ENCODE measurements at regions of chr1 and their contacts with region 1.

Region 1: GRCh38 chr1:201170533-201171062 is 16.3 kb upstream of the TMEM9 start:
- DNase-seq: peak; percentile 88
- H3K4me3 Mint-ChIP-seq: peak overlapping the region; percentile 81
- H3K27ac Mint-ChIP-seq: peak overlapping the region; percentile 83
- H3K4me1 Mint-ChIP-seq: peaks cover 14% of the 10 kb centered on the region
- H3K27me3 Mint-ChIP-seq: peaks cover 36% of the 10 kb centered on the region

Region 2: GRCh38 chr1:201023517-201023902 is 147.1 kb before region 1 on chr1 and contains the start of gene KIF21B:
- intact Hi-C with region 1: loop called (anchors 5 kb)
- DNase-seq: peak; percentile 98
- H3K4me3 Mint-ChIP-seq: peak within 1 kb of the TSS; percentile 90
- H3K27ac Mint-ChIP-seq: peak within 1 kb of the TSS; percentile 97
- H3K4me1 Mint-ChIP-seq: peaks cover 70% of the 10 kb centered on the region
- H3K27me3 Mint-ChIP-seq: no peaks in the 10 kb centered on the region
- total RNA-seq, gene KIF21B: 48.3 and 49.3 TPM in 2 replicates

Region 3: GRCh38 chr1:201085916-201086735 is 84.5 kb before region 1 on chr1:
- intact Hi-C with region 1: no loop called
- DNase-seq: peak; percentile 73
- H3K4me3 Mint-ChIP-seq: no peak overlapping the region
- H3K27ac Mint-ChIP-seq: no peak overlapping the region
- H3K4me1 Mint-ChIP-seq: no peaks in the 10 kb centered on the region
- H3K27me3 Mint-ChIP-seq: peaks cover 22% of the 10 kb centered on the region

Region 4: DNA sequence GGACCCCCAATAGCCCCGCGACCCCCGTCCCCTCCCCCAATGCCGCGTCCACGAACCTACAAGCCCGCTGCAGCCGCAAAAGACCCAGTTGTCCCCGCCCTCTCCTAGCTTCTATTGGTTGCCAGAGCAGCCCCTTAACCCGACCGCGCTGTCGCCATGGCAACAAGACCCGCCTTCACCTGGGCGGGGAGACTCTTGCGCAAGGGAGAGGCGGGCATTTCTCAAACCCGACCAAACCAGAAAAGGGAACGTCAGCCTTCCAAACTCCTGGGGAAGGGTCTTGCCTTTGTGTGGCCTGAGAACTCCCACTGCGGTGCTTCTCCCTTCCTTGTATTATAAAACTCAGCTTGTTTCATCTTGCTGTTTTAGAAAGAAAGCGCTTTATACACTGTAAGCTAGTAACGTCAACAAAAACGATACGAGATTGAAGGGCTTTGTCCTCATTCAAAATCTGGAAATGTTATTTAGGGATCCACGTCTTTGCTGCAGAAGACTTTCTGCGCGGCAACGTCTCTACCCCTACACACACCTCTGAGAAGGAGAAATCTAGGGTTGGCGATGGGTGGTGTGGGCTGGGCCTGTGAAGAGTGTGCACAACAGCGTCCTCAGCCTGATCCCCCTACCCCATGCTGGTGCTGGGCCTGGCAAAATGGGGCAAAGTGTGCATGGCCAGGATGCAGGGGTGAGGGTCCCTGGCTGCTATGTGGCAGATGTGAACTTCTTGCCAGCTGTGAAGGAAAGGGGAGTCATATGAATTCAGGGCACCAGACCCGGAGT is 16.0 kb before region 1 on chr1 and contains the start of gene TMEM9:
- intact Hi-C with region 1: loop called (anchors 1 kb)
- DNase-seq: peak; percentile 99
- H3K4me3 Mint-ChIP-seq: peak within 1 kb of the TSS; percentile 90
- H3K27ac Mint-ChIP-seq: peak within 1 kb of the TSS; percentile 86
- H3K4me1 Mint-ChIP-seq: peaks cover 13% of the 10 kb centered on the region
- H3K27me3 Mint-ChIP-seq: peaks cover 16% of the 10 kb centered on the region
- total RNA-seq, gene TMEM9: 11.3 and 13.5 TPM in 2 replicates